Mammary epithelial cell (primary cell): ENCODE measurements at regions of chr14 and their contacts with region 1.

Region 1: DNA sequence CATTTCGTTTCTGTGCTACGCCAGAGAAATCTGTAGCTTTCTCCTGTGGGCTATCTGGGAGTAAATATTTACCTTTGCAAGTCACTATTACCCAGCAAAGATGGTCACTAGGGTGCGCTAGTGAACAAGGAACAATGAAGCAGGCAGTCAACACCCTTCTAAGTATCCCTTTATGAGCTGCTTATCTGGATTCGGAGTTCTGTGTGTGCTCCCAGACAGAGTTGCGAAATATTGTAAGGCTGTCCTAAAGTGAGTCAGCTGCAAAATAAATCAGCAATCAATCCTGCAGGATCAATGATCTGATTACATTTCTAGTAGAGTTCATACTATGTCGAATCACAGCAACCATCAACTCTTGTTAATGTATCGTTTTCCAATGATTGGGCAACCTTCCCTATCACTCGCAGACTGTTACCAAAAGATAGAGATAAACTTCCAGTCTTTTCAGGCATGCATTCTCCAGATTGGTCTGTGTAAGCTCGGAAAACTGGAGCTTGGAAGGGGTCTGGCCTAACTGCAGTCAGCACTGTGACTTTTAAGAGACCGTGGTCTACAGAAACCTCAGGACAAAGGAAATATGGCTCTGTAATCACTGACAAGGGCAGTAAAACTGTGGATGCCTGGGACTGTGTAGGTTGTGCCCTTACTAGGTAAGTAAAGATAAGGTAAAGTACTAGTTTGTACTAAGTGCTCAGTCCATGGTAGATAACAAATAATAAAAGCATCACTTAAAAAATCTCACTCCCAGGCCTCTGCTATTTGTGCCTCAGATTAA is 133.5 kb downstream of the KCNK10 start:
- DNase-seq: peak; percentile 77
- H3K4me3 ChIP-seq: no peak overlapping the region
- H3K27ac ChIP-seq: no peak overlapping the region
- H3K4me1 ChIP-seq: no peaks in the 10 kb centered on the region
- H3K27me3 ChIP-seq: no peaks in the 10 kb centered on the region
- CTCF ChIP-seq: peak; percentile 73 to 80

Region 2: GRCh38 chr14:87944987-87945604 is 244.5 kb before region 1 on chr14:
- CTCF ChIA-PET with region 1: no interaction called
- dilution Hi-C with region 1: no loop called
- in situ Hi-C with region 1: loop called in 1 of 2 experiments (anchors 25 kb)
- intact Hi-C with region 1: no loop called
- DNase-seq: peak; percentile 23
- H3K4me3 ChIP-seq: no peak overlapping the region
- H3K27ac ChIP-seq: no peak overlapping the region
- H3K4me1 ChIP-seq: no peaks in the 10 kb centered on the region
- H3K27me3 ChIP-seq: no peaks in the 10 kb centered on the region
- CTCF ChIP-seq: peak; percentile 44 to 54

Region 3: DNA sequence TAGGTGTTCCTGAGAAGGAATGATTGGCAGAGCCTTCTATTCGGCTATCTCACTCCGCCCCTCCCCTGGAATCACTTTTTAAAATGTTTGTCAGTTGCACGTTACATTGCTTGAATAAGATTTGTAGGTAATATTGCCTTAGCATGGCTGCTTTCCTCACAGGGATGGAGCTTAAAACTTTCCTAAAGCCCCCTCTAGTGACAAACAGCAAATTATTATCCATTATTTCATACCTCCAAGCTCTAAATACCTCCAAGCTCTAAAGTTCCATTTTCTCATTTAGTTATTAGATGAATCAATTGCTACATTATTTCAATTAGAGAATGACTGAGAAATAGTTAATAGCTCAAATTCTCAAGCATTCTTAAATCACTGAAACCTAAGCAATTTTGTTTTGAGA is 190.8 kb after region 1 on chr14:
- CTCF ChIA-PET with region 1: interaction called, 6 read pairs
- dilution Hi-C with region 1: no loop called
- in situ Hi-C with region 1: loop called in 1 of 2 experiments (anchors 25 kb)
- intact Hi-C with region 1: loop called (anchors 1 kb)
- DNase-seq: no peak
- H3K4me3 ChIP-seq: no peak overlapping the region
- H3K27ac ChIP-seq: no peak overlapping the region
- H3K4me1 ChIP-seq: peaks cover 5% of the 10 kb centered on the region
- H3K27me3 ChIP-seq: peaks cover 4% of the 10 kb centered on the region
- CTCF ChIP-seq: peak in 1 of 2 donors; percentile 29

Region 4: GRCh38 chr14:88437658-88438057 is 248.1 kb after region 1 on chr14:
- CTCF ChIA-PET with region 1: interaction called, 5 read pairs
- dilution Hi-C with region 1: no loop called
- in situ Hi-C with region 1: no loop called
- intact Hi-C with region 1: loop called (anchors 2 kb)
- DNase-seq: no peak
- H3K4me3 ChIP-seq: no peak overlapping the region
- H3K27ac ChIP-seq: no peak overlapping the region
- H3K4me1 ChIP-seq: no peaks in the 10 kb centered on the region
- H3K27me3 ChIP-seq: no peaks in the 10 kb centered on the region
- CTCF ChIP-seq: peak in 1 of 2 donors; percentile 30

Region 5: GRCh38 chr14:88562831-88563686 is 373.5 kb after region 1 on chr14 and contains the start of gene ZC3H14:
- CTCF ChIA-PET with region 1: interaction called, 3 read pairs
- dilution Hi-C with region 1: no loop called
- in situ Hi-C with region 1: loop called in 1 of 2 experiments (anchors 25 kb)
- intact Hi-C with region 1: loop called (anchors 2 kb)
- DNase-seq: peak; percentile 89
- H3K4me3 ChIP-seq: peak within 1 kb of the TSS; percentile 80 to 99 (median 98)
- H3K27ac ChIP-seq: peak within 1 kb of the TSS; percentile 48
- H3K4me1 ChIP-seq: peaks cover 9% of the 10 kb centered on the region
- H3K27me3 ChIP-seq: no peaks in the 10 kb centered on the region
- CTCF ChIP-seq: no peak
- total RNA-seq, gene ZC3H14: 60.7 to 70.3 TPM